ENCODE measurements at regions of chr4 and their contacts with region 1.

Region 1: DNA sequence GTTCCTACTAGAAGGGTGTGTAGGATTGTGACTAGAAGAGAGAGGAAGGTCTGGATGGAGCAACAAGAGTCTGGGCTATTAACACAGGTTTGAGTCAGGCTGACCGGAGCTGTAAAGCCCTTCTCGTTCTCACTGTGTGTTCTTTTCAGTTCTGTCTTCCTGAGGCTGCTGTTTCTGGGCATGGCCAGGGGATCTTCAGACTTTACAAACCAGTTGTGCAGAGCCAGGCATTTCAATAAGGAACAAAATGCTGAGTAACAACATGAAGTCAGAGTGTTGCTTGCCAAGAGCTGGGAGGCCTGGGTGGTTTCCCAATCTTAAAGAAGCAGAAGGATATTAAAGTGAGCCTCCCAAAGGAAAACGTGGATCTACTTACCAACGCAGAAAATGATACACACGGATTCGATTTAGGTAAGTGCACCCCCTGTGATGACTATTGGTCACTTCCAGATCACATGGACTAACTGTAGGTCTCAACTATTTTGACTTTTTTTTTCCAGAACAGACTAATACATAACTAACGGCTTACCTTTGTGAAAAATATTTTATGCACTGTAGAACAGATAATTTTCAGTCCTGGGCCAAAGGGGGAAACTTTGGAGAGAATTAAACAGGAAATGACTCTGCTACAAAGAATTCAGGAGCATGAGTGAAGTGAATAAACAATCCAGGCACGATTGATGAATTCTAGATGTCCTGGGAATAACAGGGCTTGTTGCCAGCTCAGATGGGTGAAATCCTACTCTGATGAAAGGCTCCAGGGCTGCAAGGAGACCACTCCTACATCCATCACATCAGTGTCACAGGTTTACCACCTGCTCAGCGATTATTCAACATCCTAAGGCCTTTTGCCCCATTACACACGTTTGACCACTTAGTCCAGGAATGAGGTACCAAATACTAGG is 94.5 kb downstream of the ANXA3 start:
- H3K4me3 Mint-ChIP-seq: peak overlapping the region; percentile 66
- H3K27ac Mint-ChIP-seq: peak overlapping the region; percentile 94
- H3K4me1 Mint-ChIP-seq: peaks cover 72% of the 10 kb centered on the region
- H3K27me3 Mint-ChIP-seq: no peaks in the 10 kb centered on the region

Region 2: DNA sequence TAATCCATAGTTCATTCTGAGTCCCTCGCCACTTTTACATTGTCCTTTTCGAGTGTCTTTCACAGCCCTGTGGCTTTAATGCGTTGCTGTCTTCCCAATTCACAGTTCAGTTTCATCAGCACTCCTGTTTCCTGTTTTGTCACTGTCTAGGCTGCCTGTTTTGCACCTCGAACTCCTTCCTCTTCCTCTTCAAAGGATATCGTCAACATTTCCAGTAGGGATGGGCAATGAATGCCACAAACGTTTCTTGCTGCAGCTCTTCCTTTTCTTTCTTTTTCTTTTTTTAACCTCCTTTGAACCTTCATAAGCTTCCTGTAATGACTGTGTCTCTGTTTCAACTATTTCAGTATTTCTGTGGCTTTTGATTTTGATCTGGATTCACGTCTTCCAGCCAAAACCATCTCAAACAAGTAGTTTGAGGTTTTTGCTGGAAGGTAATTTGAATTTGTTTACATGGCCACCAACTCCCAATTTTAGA is 10.9 kb after region 1 on chr4:
- intact Hi-C with region 1: loop called (anchors 1 kb)
- H3K4me3 Mint-ChIP-seq: peak overlapping the region; percentile 54
- H3K27ac Mint-ChIP-seq: peak overlapping the region; percentile 96
- H3K4me1 Mint-ChIP-seq: peaks cover 79% of the 10 kb centered on the region
- H3K27me3 Mint-ChIP-seq: no peaks in the 10 kb centered on the region

Region 3: DNA sequence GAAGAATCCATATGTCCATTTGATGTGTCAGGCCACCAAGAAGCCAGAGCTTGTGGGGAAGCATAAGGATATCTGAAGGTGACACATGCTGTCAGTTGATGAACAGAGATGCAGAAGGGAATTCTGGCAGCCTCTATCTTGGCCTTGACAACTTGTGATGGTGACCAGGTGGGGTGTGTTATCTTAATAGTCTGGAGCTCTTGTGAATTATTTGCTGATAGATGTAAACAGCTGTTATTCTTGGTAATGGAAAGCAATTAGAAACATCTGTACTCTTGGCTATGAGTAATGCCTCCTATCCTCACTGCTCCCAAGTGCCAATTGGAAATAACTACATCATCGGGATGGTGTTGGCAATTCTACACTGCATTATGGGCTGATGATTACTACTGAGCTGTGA is 627.8 kb after region 1 on chr4:
- intact Hi-C with region 1: no loop called
- H3K4me3 Mint-ChIP-seq: no peak overlapping the region
- H3K27ac Mint-ChIP-seq: no peak overlapping the region
- H3K4me1 Mint-ChIP-seq: no peaks in the 10 kb centered on the region
- H3K27me3 Mint-ChIP-seq: no peaks in the 10 kb centered on the region

Measured in dendritic cell treated with granulocyte-macrophage colony-stimulating factor and Interleukin-4, amounts not matched to agents 40 ng/mL and 50 ng/mL, for 4 days (primary cell).